ENCODE measurements at regions of chr9 and their contacts with region 1.

Region 1: DNA sequence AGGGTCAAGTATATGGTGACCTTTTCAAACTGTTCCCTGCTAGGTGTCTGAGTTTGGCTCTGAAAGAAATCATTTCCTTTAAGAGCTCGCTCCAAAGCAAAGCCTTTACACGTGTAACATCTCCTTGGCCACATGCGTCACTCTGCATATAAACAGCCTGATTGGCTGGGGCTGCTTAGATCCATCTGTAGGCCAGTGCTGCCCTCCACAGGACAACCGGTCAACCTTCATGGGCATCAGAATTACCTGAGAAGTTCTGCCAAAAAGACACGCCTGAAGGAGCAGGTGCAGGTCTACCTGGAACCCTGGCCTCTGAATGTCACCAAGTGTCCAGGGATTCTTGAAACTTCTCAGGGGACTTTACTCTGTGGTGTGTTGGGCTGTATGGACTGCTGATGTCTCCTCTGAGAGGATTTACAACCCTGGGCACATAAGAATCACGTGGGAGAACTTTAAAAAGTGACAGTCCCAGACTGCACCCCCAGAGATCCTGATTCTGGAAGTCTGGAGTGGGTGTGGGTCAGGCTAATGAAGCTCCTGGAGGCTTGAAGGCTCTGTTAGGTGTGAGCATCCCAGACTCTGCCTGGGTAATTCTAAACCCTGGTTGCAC is 497.6 kb downstream of the GADD45G start:
- DNase-seq: peak; percentile 82

Region 2: DNA sequence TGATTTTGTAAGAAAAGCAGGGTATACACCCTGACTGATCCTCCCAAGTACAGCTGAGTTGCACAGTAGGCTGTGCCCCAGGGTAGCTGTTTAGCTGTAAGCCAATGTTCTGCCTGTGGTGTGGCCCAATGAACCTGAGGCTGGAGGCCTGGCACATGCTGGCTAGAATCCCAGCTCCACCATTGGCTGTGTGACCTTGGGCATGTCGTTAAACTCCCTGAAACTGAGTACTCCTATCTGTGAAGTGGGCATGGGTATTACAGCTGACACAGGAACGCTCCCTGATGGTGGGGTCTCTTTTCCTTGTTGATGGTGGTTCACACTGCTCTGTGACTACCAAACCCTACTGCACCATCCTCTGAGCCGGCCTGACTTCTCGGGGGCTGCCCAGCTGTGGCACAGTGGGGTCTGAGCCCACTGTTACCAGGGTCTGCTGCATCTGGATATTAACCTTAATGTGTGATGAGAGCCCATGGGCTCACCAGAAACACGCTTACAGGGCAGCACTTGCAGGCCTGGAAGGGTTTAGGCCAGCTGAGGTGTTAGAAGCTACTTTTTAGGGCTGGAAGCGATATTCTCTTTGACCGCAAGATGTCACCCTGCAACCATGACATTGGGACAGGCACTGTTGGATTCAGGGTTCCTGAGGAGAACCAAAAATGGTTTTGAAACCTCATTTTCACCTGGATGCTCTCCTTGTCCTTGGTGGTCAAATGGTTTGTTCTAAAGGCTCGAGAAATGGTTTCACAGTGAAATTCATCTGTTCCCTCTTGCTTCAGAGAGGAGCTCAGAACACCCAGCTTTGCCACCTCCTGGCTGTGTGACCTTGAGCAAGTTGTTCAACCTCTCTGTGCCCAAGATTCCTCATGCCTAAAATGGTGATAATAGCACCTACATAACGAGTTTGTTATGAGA is 504.4 kb before region 1 on chr9:
- CTCF ChIA-PET with region 1: interaction called, 74 read pairs
- POLR2A ChIA-PET with region 1: interaction called, 4 read pairs
- DNase-seq: peak; percentile 59

Region 3: DNA sequence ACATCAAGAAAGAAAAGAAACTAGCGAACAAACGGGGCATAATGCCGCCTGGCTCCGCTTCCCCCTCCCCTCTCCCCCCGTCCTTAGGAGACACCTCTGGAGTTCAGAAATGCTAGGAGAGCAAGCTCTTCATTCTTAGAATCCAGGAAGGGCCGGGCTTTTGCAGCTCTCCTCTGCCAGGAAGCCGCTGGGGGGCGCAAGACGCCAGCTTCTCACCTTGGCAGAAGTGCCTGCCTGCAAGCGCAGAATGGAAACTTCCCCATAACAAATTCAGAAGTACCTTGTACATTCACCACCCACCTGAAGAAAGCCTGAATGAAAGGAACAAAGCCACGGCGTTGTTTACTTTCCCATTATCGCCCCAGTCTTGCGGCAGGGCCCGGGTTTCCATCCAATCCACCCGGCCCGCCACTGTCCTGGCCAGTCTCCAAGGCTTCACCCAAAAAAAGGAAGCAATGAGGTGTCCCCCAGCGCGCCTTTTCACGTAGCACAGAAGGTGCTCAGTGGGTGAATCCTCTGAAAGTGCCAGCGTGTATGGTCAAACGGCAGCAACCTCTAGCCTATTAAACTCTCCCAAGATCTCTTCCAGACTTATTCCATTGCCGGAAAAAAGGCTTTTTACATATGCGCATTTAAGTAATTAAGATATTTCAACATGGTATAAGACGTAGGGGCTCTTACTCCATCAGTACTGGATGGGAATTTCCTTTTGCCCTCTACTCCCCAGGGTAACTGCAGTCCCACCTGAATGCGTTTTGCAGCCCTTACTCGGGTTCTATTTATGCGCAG is 499.2 kb before region 1 on chr9:
- CTCF ChIA-PET with region 1: interaction called, 74 read pairs
- POLR2A ChIA-PET with region 1: interaction called, 4 read pairs
- DNase-seq: peak; percentile 68

Region 4: GRCh38 chr9:90012949-90013348 is 89.4 kb before region 1 on chr9:
- CTCF ChIA-PET with region 1: no interaction called
- POLR2A ChIA-PET with region 1: no interaction called
- DNase-seq: no peak